ENCODE measurements at regions of chr7 and their contacts with region 1.

Region 1: DNA sequence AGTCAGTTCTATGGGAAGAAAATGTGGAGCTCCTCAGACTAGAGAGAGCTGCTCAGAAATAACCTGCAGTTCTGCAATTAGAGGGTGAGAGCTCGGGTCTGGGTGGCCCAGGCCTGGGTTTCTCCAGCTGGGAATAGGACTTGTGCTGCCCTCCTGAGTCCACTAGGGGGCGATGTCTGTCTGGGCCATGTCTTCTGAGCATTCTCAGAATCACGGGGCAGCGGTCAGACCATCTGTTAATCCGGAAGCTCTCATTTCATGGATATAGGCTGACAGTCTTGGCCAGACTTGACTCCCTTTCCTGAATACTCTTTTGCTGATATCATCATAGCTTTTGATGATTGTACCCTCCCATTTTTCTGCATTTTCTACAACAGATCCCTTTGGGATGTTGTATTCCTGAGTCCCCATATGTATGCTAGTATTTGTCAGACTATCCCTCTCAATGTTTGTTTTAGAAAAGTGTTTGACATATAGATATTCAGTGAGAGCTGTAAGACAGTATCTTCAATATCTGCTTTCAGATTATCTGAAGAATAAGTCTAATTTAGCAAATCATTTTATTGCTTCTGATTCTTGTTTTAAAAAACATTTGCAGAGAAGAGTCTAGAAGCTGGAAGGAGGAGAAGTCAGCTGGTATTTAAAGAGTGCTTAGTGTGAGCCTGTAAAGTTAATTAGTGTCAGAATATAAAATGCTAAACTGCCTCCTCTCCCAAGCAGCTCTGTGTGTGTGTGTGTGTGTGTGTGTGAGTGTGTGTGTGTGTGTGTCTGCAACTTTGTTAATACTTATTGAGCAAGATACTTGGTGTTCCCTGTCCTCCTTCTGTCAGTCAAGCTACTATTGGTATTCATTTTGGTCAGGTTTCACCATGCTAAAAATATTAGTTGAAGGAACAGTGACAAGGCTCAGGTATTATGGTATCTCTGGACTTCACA is 38.0 kb downstream of the STARD3NL start:
- H3K4me3 ChIP-seq: no peak overlapping the region
- H3K27ac ChIP-seq: no peak overlapping the region
- H3K4me1 ChIP-seq: peaks cover 2% of the 10 kb centered on the region; the same call in 1 of the 2 replicates
- CTCF ChIP-seq: peak; percentile 61

Region 2: DNA sequence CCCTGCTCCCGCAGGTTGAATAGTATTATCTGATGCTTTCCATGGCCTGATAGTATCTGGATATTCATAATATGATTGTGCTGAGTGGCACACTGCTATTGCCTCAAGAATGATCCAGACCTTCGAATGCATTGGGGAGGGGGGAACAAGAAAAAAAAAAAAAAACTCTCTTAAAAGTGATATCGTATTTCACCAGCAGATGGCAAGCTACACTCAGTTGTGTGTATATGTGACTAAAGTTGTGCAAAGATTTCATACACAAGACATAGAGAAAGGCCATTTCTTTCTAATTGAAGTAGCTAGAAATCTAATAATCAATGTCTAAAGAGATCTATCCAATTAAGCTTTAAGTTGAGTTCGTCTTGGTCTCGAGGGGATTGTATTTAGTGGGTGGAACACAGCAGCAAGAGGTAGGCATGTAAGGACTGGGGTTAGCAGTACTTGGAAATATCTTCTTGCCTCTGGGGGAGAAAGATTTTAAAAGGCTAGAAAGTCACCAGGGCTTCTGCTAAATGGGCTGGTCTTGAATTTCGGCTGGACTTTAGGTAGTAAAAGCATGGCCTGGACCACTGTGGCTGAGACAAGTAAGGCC is 314.7 kb before region 1 on chr7:
- CTCF ChIA-PET with region 1: interaction called, 30 read pairs
- POLR2A ChIA-PET with region 1: no interaction called
- H3K4me3 ChIP-seq: no peak overlapping the region
- H3K27ac ChIP-seq: no peak overlapping the region
- H3K4me1 ChIP-seq: no peaks in the 10 kb centered on the region
- CTCF ChIP-seq: peak; percentile 44; the same call in 1 of the 2 replicates

Region 3: GRCh38 chr7:38169847-38170246 is 46.2 kb before region 1 on chr7:
- CTCF ChIA-PET with region 1: interaction called, 11 read pairs
- POLR2A ChIA-PET with region 1: no interaction called
- H3K4me3 ChIP-seq: no peak overlapping the region
- H3K27ac ChIP-seq: no peak overlapping the region
- H3K4me1 ChIP-seq: no peaks in the 10 kb centered on the region
- CTCF ChIP-seq: no peak

Region 4: GRCh38 chr7:38195804-38196595 is 20.0 kb before region 1 on chr7:
- CTCF ChIA-PET with region 1: interaction called, 37 read pairs
- POLR2A ChIA-PET with region 1: no interaction called
- H3K4me3 ChIP-seq: no peak overlapping the region
- H3K27ac ChIP-seq: no peak overlapping the region
- H3K4me1 ChIP-seq: peaks cover 15% of the 10 kb centered on the region
- CTCF ChIP-seq: no peak

Region 5: GRCh38 chr7:38311329-38311937 is 95.4 kb after region 1 on chr7:
- CTCF ChIA-PET with region 1: interaction called, 26 read pairs
- POLR2A ChIA-PET with region 1: no interaction called
- H3K4me3 ChIP-seq: peak overlapping the region; percentile 47
- H3K27ac ChIP-seq: no peak overlapping the region; the same call in 1 of the 2 replicates
- H3K4me1 ChIP-seq: peaks cover 6% of the 10 kb centered on the region
- CTCF ChIP-seq: no peak

Region 6: GRCh38 chr7:38327637-38328036 is 111.6 kb after region 1 on chr7:
- CTCF ChIA-PET with region 1: interaction called, 112 read pairs
- POLR2A ChIA-PET with region 1: no interaction called
- H3K4me3 ChIP-seq: no peak overlapping the region
- H3K27ac ChIP-seq: no peak overlapping the region
- H3K4me1 ChIP-seq: no peaks in the 10 kb centered on the region
- CTCF ChIP-seq: no peak

Region 7: DNA sequence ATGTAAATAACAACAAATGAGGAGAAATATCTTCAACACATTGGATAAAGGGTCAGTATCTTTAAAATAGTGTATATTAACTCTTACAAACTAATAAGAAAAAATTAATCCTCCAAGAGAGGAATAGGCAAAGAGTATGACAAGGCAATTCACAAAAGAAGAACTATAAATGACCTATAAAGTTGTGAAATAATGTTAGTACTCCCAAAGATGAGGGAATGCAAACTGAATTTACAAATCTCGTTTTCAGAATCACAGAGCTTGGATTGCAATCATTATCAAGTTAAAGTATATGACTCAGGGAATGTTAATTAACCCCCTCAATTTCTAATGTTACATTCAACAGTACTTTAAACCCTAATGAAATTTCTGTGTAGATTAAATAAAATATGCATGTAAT is 144.8 kb after region 1 on chr7:
- CTCF ChIA-PET with region 1: interaction called, 11 read pairs
- POLR2A ChIA-PET with region 1: no interaction called
- H3K4me3 ChIP-seq: no peak overlapping the region
- H3K27ac ChIP-seq: no peak overlapping the region
- H3K4me1 ChIP-seq: no peaks in the 10 kb centered on the region
- CTCF ChIP-seq: no peak